ENCODE measurements at regions of chrX and their contacts with region 1.

Region 1: DNA sequence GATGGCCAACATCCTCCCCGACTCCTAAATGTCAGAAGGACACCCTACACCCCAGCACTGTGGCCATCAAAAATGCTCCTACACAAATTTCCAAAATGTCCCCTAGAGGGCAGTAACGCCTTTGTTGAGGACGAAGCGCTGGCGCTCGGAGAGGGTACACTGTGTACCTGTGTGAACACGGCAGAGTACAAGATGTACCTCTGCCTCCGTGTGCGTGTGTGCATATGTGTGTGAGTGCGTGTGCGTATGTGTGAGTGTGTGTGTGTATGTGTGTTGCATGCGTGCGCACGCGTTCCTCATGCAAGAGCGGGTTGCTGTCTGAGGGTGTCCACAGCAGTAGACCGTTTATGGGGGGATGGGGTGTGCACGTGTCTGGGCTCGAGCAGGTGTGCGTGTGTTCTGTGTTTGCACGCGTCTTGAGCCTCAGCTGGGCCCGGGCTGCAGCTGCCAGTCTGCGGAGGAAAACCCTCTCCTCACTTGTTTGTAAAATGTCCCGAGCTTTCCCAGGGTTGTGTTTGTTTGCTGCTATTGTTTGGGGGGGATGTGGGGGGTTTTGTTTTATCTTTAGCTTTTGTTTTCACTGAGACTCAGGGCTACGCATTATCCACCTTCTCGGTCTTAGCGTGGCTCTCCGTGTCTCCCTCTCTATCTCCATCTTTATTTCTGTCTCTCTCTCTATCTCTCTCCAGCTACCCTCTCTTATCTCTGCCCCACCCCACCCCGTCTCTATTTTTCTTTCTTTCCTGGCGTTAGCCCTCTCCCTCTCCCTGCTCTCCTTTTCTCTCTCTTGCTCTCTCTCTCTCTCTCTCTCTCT is 10.4 kb upstream of the TSPYL2 start:
- DNase-seq: peak; percentile 74
- ATAC-seq: peak; percentile 83
- H3K4me3 Mint-ChIP-seq: peak overlapping the region; percentile 85
- H3K27ac Mint-ChIP-seq: peak overlapping the region; percentile 92
- H3K4me1 Mint-ChIP-seq: peaks cover 12% of the 10 kb centered on the region
- H3K27me3 Mint-ChIP-seq: no peaks in the 10 kb centered on the region
- CTCF ChIP-seq: peak; percentile 59

Region 2: DNA sequence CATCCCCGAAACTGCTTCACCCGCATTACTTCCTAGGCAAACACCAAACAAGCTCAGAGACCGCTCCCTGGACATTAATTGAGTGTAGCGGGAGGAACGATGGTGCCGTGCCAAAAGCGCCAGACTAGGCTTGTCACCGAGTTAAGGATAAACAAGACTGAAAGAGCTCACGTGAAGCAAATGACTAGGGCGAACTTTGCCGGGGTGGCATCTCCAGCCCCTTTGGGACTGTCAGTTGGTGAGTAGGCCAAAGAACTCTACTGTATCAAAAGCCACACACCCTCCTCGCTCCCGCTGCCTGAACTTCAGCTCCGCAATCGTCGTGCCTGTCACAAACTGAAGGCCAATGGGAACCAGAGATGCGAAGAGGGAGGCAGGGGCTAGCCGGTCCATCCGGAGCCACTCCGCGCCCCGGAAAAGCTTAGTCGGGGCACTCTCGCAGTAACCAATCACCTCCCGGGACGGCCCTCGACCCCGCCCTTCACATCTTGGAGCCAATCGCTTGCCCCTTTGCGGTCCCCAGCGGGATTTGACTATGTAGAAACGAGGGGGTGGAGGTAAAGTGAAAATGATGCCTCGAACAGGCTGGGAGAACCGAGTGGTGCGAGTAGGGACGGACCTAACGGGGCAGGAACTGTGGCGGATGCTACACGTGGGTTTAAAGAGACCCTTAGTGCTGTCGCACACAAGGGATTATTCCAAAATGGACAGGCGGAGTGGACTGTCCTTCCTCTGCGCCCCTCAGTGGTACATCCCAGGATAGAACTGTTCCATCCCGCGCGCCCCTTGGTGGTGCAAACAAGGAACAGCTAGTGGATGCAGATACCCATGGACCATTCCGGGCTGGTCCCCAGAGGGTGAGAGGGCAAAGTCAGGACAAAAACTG is 76.4 kb before region 1 on chrX:
- CTCF ChIA-PET with region 1: no interaction called
- POLR2A ChIA-PET with region 1: no interaction called
- intact Hi-C with region 1: no loop called
- DNase-seq: peak; percentile 94
- ATAC-seq: peak; percentile 97
- H3K4me3 Mint-ChIP-seq: peak overlapping the region; percentile 93
- H3K27ac Mint-ChIP-seq: peak overlapping the region; percentile 100
- H3K4me1 Mint-ChIP-seq: peaks cover 15% of the 10 kb centered on the region
- H3K27me3 Mint-ChIP-seq: no peaks in the 10 kb centered on the region
- CTCF ChIP-seq: peak; percentile 63

Region 3: GRCh38 chrX:53081925-53082772 is 10.3 kb after region 1 on chrX and contains the start of gene TSPYL2:
- CTCF ChIA-PET with region 1: interaction called, 7 read pairs
- POLR2A ChIA-PET with region 1: interaction called, 10 read pairs
- intact Hi-C with region 1: no loop called
- DNase-seq: peak; percentile 93
- ATAC-seq: peak; percentile 91
- H3K4me3 Mint-ChIP-seq: peak within 1 kb of the TSS; percentile 89
- H3K27ac Mint-ChIP-seq: peak within 1 kb of the TSS; percentile 96
- H3K4me1 Mint-ChIP-seq: peaks cover 43% of the 10 kb centered on the region
- H3K27me3 Mint-ChIP-seq: no peaks in the 10 kb centered on the region
- CTCF ChIP-seq: no peak
- total RNA-seq, gene TSPYL2: 56.8 to 61.0 TPM

Region 4: DNA sequence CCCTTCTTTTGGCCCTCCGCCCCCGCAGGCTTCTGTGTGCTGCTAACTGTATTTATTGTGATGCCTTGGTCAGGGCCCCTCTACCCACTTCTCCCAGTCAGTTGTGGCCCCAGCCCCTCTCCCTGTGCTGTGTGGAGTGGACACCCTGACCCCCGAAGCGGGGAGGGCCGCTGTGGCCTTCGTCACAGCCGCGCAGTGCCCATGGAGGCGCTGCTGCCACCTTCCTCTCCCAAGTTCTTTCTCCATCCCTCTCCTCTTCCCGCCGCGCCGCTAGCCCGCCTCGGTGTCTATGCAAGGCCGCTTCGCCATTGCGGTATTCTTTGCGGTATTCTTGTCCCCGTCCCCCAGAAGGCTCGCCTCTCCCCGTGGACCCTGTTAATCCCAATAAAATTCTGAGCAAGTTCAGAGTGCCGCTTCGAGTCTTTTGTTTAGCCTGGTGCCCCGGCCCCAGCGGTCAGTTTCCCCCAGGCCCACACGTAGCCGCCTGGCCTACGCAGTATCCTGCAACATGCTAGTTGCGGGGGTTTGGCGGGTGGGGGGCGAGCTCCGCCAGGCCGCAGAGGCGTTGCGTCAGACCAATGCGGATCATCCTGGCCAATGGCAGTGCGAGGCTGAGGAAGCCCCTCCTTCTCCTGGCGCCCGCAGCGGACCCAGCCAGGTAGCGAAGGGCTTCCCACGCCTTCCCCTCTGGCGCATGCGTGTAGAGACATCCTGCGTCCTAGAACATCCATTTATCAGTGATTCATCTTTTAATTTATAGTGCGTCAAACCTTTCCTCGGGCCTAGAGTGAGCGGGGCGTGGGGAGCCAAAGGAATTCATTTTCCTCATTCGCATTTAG is 16.5 kb after region 1 on chrX:
- CTCF ChIA-PET with region 1: interaction called, 20 read pairs
- POLR2A ChIA-PET with region 1: interaction called, 3 read pairs
- intact Hi-C with region 1: loop called (anchors 2 kb)
- DNase-seq: peak; percentile 89
- ATAC-seq: peak; percentile 74
- H3K4me3 Mint-ChIP-seq: peak overlapping the region; percentile 75
- H3K27ac Mint-ChIP-seq: peak overlapping the region; percentile 94
- H3K4me1 Mint-ChIP-seq: peaks cover 53% of the 10 kb centered on the region
- H3K27me3 Mint-ChIP-seq: no peaks in the 10 kb centered on the region
- CTCF ChIP-seq: no peak

Measured in activated CD8-positive, alpha-beta T cell treated with anti-CD3 and anti-CD28 coated beads for 36 hours (primary cell).